Heart right ventricle (tissue), 16 donors: ENCODE measurements at regions of chr3 and their contacts with region 1.

Region 1: GRCh38 chr3:71305231-71306206 is 278.0 kb downstream of the FOXP1 start:
- DNase-seq: peak; percentile 21 to 42
- ATAC-seq: peak; percentile 68 to 94 (median 90)
- H3K4me3 ChIP-seq: peak overlapping the region in 9 of 10 donors; percentile 17 to 54 (median 41)
- H3K27ac ChIP-seq: peak overlapping the region; percentile 3 to 81 (median 72)
- H3K4me1 ChIP-seq: peaks cover 0 to 54% (median 36%) of the 10 kb centered on the region in 9 donors
- H3K27me3 ChIP-seq: no peaks in the 10 kb centered on the region
- CTCF ChIP-seq: no peak

Region 2: DNA sequence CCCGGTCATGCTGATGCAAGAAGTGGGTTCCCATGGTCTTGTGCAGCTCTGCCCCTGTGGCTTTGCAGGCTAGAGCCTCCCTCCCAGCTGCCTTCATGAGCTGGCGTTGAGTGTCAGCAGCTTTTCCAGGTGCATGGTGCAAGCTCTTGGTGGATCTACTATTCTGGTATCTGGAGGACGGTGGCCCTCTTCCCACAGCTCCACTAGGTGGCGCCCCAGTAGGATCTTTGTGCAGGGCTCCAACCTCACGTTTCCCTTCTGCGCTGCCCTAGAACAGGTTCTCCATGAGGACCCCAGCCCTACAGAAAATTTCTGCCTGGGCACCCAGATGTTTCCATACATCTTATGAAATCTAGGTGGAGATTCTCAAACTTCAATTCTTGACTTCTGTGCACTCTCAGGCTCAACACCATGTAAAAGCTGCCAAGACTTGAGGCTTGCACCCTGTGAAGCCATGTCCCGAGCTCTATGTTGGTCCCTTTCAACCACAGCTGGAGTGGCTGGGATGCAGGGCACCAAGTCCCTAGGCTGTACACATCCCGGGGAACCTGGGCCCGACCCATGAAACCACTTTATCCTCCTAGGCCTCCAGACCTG is 754.7 kb before region 1 on chr3:
- intact Hi-C with region 1: loop called in 3 of 10 experiments (anchors 10 kb)
- DNase-seq: peak; percentile 65 to 72
- ATAC-seq: peak; percentile 76 to 92 (median 82)
- H3K4me3 ChIP-seq: no peak overlapping the region
- H3K27ac ChIP-seq: no peak overlapping the region
- H3K4me1 ChIP-seq: no peaks in the 10 kb centered on the region
- H3K27me3 ChIP-seq: no peaks in the 10 kb centered on the region
- CTCF ChIP-seq: peak; percentile 67 to 86 (median 81)

Region 3: GRCh38 chr3:71006810-71007785 is 298.4 kb before region 1 on chr3:
- intact Hi-C with region 1: loop called in 3 of 10 experiments (anchors 10 kb)
- DNase-seq: no peak
- ATAC-seq: peak in 7 of 8 donors; percentile 48 to 82 (median 66)
- H3K4me3 ChIP-seq: no peak overlapping the region
- H3K27ac ChIP-seq: peak overlapping the region in 8 of 10 donors; percentile 16 to 59 (median 40)
- H3K4me1 ChIP-seq: peaks cover 3 to 86% (median 55%) of the 10 kb centered on the region in 9 donors
- H3K27me3 ChIP-seq: no peaks in the 10 kb centered on the region
- CTCF ChIP-seq: peak; percentile 10 to 76 (median 58)

Region 4: GRCh38 chr3:71069797-71070196 is 235.7 kb before region 1 on chr3:
- intact Hi-C with region 1: loop called in 2 of 10 experiments (anchors 5 to 10 kb)
- DNase-seq: peak; percentile 56 to 75
- ATAC-seq: peak; percentile 45 to 70 (median 58)
- H3K4me3 ChIP-seq: no peak overlapping the region
- H3K27ac ChIP-seq: peak overlapping the region in 4 of 10 donors; percentile 15 to 50 (median 20)
- H3K4me1 ChIP-seq: peaks cover 5 to 64% (median 51%) of the 10 kb centered on the region in 9 donors
- H3K27me3 ChIP-seq: no peaks in the 10 kb centered on the region
- CTCF ChIP-seq: peak; percentile 29 to 74 (median 62)

Region 5: DNA sequence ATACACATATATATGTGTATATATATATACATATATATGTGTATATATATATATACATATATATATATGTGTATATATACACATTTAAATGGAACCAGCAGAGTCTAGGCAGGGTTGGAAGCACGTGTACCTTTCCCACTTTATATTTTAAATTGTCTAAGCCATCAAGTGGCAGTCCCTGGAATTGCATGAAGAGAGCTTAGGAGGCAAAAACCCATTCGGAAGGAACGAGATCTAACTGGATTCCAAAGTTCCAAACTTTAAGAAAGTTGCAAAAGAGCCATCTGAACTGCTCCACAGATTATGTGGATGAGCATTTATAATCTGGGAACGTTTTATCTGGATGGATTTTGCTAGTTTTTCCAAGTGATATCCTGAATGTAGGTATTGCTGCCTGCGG is 91.5 kb after region 1 on chr3:
- intact Hi-C with region 1: loop called in 1 of 10 experiments (anchors 10 kb)
- DNase-seq: peak in 1 of 2 donors; percentile 35
- ATAC-seq: no peak
- H3K4me3 ChIP-seq: no peak overlapping the region
- H3K27ac ChIP-seq: no peak overlapping the region
- H3K4me1 ChIP-seq: peaks cover 0 to 51% (median 20%) of the 10 kb centered on the region in 9 donors
- H3K27me3 ChIP-seq: no peaks in the 10 kb centered on the region
- CTCF ChIP-seq: peak; percentile 20 to 64 (median 53)